Caco-2 (cell line): ENCODE measurements at regions of chr2 and their contacts with region 1.

Region 1: GRCh38 chr2:209322041-209322440 is 101.8 kb upstream of the MAP2 start:
- DNase-seq: no peak
- H3K4me3 ChIP-seq: no peak overlapping the region
- H3K4me3 Mint-ChIP-seq: no peak overlapping the region
- H3K27ac Mint-ChIP-seq: no peak overlapping the region
- H3K4me1 ChIP-seq: no peaks in the 10 kb centered on the region
- H3K4me1 Mint-ChIP-seq: no peaks in the 10 kb centered on the region
- H3K27me3 ChIP-seq: no peaks in the 10 kb centered on the region
- H3K27me3 Mint-ChIP-seq: peaks cover 7% of the 10 kb centered on the region
- CTCF ChIP-seq: no peak

Region 2: DNA sequence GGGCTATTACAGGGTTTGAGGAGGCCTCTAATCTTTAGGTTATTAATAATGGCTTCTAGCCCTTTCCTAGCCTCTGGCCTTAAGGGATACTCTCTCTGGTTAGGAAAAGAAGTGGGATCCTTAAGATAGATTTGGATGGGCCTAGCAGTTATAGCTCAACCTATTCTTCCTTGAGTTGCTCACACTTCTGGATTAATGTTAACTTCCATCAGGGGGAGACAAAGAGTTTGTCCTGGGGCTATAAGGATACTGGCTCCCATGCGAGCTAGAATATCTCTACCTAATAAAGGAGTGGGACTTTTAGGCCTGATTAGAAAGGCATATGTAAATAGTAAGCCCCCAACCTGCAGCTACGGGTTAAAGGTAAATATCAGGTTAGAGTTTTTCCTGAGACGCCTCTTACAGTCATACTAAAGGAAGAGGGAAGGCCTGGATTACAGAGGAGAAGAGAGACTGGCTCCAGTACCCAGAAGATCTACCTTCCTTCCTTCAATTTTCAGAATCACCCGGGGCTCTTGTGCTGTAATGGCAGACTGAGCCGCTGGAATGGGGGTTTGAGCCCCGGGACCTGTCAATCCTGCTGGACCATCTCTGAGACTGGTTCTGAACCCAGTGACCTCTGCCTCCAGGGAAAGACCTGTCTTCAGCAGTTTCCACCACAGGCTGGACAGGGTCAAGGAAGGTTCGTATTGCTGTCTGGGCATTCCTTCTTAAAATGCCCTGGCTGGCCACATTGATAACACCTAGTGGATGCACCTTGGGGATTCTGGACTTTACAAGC is 929.6 kb before region 1 on chr2:
- CTCF ChIA-PET with region 1: no interaction called
- POLR2A ChIA-PET with region 1: no interaction called
- intact Hi-C with region 1: loop called (anchors 2 kb)
- DNase-seq: no peak
- H3K4me3 ChIP-seq: no peak overlapping the region
- H3K4me3 Mint-ChIP-seq: no peak overlapping the region
- H3K27ac Mint-ChIP-seq: no peak overlapping the region
- H3K4me1 ChIP-seq: no peaks in the 10 kb centered on the region
- H3K4me1 Mint-ChIP-seq: no peaks in the 10 kb centered on the region
- H3K27me3 ChIP-seq: no peaks in the 10 kb centered on the region
- H3K27me3 Mint-ChIP-seq: peaks cover 3% of the 10 kb centered on the region
- CTCF ChIP-seq: no peak

Region 3: GRCh38 chr2:209351636-209352035 is 29.6 kb after region 1 on chr2:
- CTCF ChIA-PET with region 1: no interaction called
- POLR2A ChIA-PET with region 1: no interaction called
- intact Hi-C with region 1: no loop called
- DNase-seq: no peak
- H3K4me3 ChIP-seq: no peak overlapping the region
- H3K4me3 Mint-ChIP-seq: no peak overlapping the region
- H3K27ac Mint-ChIP-seq: no peak overlapping the region
- H3K4me1 ChIP-seq: no peaks in the 10 kb centered on the region
- H3K4me1 Mint-ChIP-seq: no peaks in the 10 kb centered on the region
- H3K27me3 ChIP-seq: no peaks in the 10 kb centered on the region
- H3K27me3 Mint-ChIP-seq: no peaks in the 10 kb centered on the region
- CTCF ChIP-seq: no peak